Kidney (tissue), 22 donors: ENCODE measurements at regions of chr6 and their contacts with region 1.

Region 1: GRCh38 chr6:89368107-89368506 is 15.6 kb upstream of the UBE2J1 start:
- DNase-seq: peak in 4 of 5 donors; percentile 55 to 80 (median 66)
- H3K4me3 ChIP-seq: no peak overlapping the region
- H3K27ac ChIP-seq: no peak overlapping the region
- H3K4me1 ChIP-seq: peaks cover 0 to 5% (median 0%) of the 10 kb centered on the region in 3 donors
- H3K27me3 ChIP-seq: no peaks in the 10 kb centered on the region
- CTCF ChIP-seq: peak; percentile 75

Region 2: DNA sequence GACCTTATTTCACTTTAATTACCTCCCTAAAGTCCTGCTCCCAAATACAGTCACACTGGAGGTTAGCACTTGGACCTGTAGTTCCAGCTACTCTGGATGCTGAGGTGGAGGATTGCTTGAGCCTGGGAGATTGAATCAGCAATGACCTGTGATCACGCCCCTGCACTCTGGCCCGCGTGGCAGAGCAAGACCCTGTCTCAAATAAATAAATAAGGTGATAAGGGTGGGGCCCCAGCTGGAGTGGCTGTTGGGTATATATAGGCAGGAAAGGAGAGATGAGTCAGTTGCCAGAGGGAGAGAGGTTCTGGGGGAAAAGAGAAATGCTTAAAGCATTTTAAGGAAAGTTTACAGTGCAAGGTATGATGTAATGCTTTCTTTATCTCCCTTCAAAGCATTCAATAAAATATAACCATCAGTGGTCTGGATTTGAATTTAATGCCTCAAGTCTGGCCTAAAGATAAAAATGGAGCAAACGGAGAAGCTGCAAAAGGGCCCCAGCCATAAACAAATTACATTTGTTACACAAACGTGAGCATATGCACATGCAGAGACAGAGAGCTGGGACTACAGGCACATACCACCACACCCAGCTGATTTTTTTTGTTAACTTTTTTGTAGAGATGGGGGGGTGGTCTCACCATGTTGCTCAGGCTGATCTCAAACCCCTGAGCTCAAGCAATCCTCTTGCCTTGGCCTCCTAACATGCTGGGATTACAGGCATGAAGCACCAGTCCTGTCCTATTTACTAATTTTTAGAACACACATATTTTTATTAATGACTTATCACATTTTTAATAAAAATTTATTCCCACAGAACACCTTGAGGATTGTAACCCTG is 228.4 kb before region 1 on chr6:
- intact Hi-C with region 1: loop called (anchors 10 kb)
- DNase-seq: no peak
- H3K4me3 ChIP-seq: no peak overlapping the region
- H3K27ac ChIP-seq: no peak overlapping the region
- H3K4me1 ChIP-seq: peaks cover 0 to 4% (median 0%) of the 10 kb centered on the region in 3 donors
- H3K27me3 ChIP-seq: no peaks in the 10 kb centered on the region
- CTCF ChIP-seq: no peak